Heart right ventricle (tissue), 16 donors: ENCODE measurements at regions of chr4 and their contacts with region 1.

Region 1: GRCh38 chr4:123848606-123849005 is 452.0 kb downstream of the SPRY1 start:
- DNase-seq: no peak
- ATAC-seq: peak in 3 of 8 donors; percentile 35 to 47 (median 46)
- H3K4me3 ChIP-seq: no peak overlapping the region
- H3K27ac ChIP-seq: peak overlapping the region in 6 of 10 donors; percentile 27 to 62 (median 51)
- H3K4me1 ChIP-seq: peaks cover 0 to 18% (median 0%) of the 10 kb centered on the region in 9 donors
- H3K27me3 ChIP-seq: no peaks in the 10 kb centered on the region
- CTCF ChIP-seq: no peak

Region 2: DNA sequence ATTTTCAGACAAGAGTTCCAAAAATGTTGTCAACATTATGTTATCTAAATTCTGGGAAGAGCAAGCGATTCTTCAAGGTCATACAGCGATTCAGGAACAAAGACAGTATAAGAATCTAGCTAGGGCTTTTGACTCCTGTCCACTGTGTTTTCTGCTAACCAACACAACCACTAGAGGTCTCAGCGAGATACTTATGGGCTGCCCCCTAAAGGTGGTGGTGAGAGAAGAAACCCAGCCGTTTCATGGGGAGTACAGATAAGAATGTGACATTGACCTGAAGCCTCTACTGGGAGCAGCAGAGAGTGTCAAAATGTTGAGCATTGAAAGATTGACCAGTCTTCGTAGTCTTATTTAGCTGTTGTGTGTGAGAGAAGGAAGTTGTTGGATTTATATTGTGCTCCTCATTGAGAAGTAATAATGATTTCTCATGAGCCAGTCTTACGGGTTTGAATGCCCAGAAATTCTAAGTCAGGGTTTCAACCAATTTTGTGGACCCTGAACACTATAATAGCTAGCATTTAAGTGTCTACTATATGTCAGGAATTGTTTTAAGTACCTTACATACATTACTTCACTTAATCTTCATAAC is 283.8 kb before region 1 on chr4:
- intact Hi-C with region 1: loop called in 1 of 10 experiments (anchors 10 kb)
- DNase-seq: peak in 1 of 2 donors; percentile 69
- ATAC-seq: peak; percentile 68 to 94 (median 91)
- H3K4me3 ChIP-seq: no peak overlapping the region
- H3K27ac ChIP-seq: no peak overlapping the region
- H3K4me1 ChIP-seq: peaks cover 0 to 7% (median 4%) of the 10 kb centered on the region in 9 donors
- H3K27me3 ChIP-seq: no peaks in the 10 kb centered on the region
- CTCF ChIP-seq: peak; percentile 56 to 92 (median 73)

Region 3: GRCh38 chr4:123893011-123893981 is 44.7 kb after region 1 on chr4:
- intact Hi-C with region 1: loop called in 1 of 10 experiments (anchors 5 kb)
- DNase-seq: no peak
- ATAC-seq: peak in 7 of 8 donors; percentile 35 to 70 (median 61)
- H3K4me3 ChIP-seq: peak overlapping the region in 1 of 10 donors; percentile 5
- H3K27ac ChIP-seq: peak overlapping the region; percentile 45 to 80 (median 62)
- H3K4me1 ChIP-seq: peaks cover 3 to 48% (median 31%) of the 10 kb centered on the region in 9 donors
- H3K27me3 ChIP-seq: no peaks in the 10 kb centered on the region
- CTCF ChIP-seq: no peak

Region 4: GRCh38 chr4:124092541-124092984 is 244.0 kb after region 1 on chr4:
- intact Hi-C with region 1: no loop called
- DNase-seq: peak in 1 of 2 donors; percentile 31
- ATAC-seq: peak in 6 of 8 donors; percentile 20 to 76 (median 45)
- H3K4me3 ChIP-seq: no peak overlapping the region
- H3K27ac ChIP-seq: peak overlapping the region in 5 of 10 donors; percentile 3 to 55 (median 38)
- H3K4me1 ChIP-seq: peaks cover 0 to 17% (median 4%) of the 10 kb centered on the region in 9 donors
- H3K27me3 ChIP-seq: no peaks in the 10 kb centered on the region
- CTCF ChIP-seq: no peak